Mammary epithelial cell (primary cell): ENCODE measurements at regions of chr2 and their contacts with region 1.

Region 1: DNA sequence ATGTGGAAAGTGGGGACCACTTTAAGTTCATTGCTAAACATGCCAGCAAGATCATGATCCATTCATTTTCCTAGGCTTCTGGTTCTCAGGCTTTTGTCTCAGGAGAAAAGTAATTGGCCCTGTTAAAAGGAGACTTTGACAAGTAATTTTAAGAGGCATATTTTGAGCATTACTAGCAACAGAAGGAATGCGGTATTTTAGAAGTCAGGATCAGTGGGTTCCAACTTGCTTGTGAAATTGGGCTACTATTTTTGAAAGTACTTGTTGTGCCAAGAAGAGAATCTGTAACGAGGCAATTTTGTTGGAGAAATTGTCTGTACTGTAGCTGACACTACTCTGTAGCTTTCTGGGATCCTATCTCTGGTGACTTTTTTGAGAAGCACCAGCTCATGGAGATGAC is 59.4 kb downstream of the CERS6 start:
- DNase-seq: peak; percentile 51
- H3K4me3 ChIP-seq: no peak overlapping the region
- H3K27ac ChIP-seq: peak overlapping the region; percentile 9
- H3K4me1 ChIP-seq: peaks cover 41% of the 10 kb centered on the region
- H3K27me3 ChIP-seq: no peaks in the 10 kb centered on the region
- CTCF ChIP-seq: no peak

Region 2: GRCh38 chr2:168311261-168311910 is 204.1 kb before region 1 on chr2:
- CTCF ChIA-PET with region 1: no interaction called
- dilution Hi-C with region 1: no loop called
- in situ Hi-C with region 1: no loop called
- intact Hi-C with region 1: no loop called
- DNase-seq: no peak
- H3K4me3 ChIP-seq: no peak overlapping the region
- H3K27ac ChIP-seq: no peak overlapping the region
- H3K4me1 ChIP-seq: no peaks in the 10 kb centered on the region
- H3K27me3 ChIP-seq: no peaks in the 10 kb centered on the region
- CTCF ChIP-seq: no peak

Region 3: DNA sequence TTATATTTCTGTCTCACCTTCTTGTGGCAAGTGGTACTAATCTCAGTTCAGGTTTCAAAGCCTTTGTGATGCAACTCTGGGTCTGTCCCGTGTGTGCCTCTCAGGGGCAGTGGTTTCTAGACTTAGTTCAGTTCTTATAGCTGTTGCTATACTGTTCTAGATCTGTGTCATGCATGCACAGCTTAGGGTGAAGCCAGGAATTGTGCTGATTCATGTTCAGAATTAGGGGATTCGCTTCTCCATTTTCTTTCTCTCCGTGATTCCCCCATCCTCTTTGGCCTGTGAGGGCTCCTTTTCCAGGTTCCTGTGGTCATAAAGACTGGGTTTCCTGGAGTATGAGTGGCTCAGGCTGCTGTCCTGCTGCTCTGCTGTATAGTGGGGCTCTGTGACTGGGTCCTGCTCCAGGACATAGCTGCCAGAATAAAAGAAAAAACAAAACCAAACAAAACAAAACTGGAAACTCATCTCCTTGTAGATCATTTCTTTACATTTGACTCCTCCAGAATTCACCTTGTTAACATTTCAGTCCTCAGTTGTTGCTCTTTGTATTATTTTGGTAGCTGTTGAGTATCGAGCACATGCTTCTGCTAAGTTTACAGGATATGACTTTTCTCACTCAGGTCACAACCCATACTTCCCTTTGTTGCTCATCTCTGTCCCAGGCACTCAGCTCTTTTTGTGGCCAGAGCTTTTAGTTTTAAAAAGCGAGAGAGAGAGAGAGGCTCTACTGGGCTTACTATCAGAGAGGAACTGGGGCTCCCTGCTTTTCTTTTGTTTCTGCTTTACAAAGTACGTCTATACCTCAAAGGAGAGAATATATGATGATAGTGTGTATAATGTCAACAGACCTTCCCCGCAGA is 25.3 kb before region 1 on chr2:
- CTCF ChIA-PET with region 1: no interaction called
- dilution Hi-C with region 1: no loop called
- in situ Hi-C with region 1: no loop called
- intact Hi-C with region 1: loop called (anchors 2 kb)
- DNase-seq: peak; percentile 48
- H3K4me3 ChIP-seq: no peak overlapping the region
- H3K27ac ChIP-seq: no peak overlapping the region
- H3K4me1 ChIP-seq: peaks cover 12% of the 10 kb centered on the region
- H3K27me3 ChIP-seq: no peaks in the 10 kb centered on the region
- CTCF ChIP-seq: no peak